Spleen (tissue), 13 donors: ENCODE measurements at regions of chr14 and their contacts with region 1.

Region 1: DNA sequence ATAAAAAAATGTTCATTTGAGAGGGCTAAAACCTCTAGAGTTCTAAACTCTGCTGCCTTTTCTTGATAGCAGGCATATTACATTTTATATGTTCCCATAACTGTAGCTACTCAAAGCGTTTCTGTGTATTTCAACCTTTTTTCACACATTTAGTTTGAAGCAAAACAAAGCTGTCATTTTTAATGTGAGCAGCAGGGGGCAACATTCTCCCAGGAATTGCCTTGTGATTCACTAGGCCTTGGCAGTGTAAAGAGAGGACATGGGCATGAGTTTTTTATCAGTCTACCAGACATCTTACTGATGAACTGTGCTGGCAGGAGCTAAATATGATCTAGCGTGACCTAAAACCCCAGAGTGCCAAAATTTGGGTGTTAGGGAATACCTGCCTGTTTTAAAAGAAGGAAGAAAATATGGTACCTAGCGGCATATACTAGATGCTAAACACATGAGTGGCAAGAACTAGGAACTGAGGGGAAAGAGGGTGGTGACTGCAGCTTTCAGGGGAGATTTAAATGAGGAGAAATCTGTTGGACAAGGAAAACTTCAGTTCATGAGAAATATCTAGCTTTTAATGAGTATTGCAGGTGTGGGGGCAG is 65.3 kb downstream of the IFT43 start:
- DNase-seq: no peak
- H3K4me3 ChIP-seq: no peak overlapping the region
- H3K27ac ChIP-seq: no peak overlapping the region
- H3K4me1 ChIP-seq: peaks cover 0 to 15% (median 6%) of the 10 kb centered on the region in 6 donors
- H3K27me3 ChIP-seq: no peaks in the 10 kb centered on the region
- CTCF ChIP-seq: peak; percentile 57 to 85 (median 72)
- POLR2A ChIP-seq: no peak

Region 2: DNA sequence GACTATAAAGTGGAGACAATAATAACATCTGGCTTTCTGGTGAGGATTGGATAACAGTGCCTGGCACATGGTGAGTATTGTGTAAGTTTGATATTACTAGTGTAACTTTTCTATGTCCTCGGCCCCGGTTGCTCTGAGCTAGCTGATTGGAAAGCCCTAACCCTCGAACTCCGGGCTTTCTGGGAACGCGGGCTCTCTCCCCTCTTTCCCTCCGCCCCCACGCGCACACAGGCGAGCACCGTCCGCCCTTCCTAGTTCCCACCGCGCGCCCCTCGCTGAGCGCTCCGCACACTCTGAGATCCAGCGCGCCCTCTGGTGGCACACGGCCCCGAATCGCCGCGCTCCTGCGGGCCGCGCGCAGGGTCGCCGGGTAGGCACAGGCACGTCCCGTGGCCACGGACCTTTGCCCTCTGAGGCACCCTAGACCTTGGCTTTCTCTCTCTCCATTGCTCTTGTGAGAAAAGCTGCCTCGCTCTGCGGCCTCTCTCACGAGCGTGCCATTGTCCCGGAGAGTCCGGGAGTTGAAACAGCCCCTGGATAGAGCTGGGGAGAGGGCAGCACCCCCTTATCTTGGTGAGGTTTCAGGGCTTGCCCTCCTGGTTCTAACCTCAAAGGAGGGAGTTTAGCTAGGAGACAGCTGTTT is 301.9 kb after region 1 on chr14:
- intact Hi-C with region 1: loop called (anchors 2 kb)
- DNase-seq: peak; percentile 81
- H3K4me3 ChIP-seq: peak overlapping the region in 1 of 8 donors; percentile 21
- H3K27ac ChIP-seq: no peak overlapping the region
- H3K4me1 ChIP-seq: peaks cover 0 to 18% (median 13%) of the 10 kb centered on the region in 6 donors
- H3K27me3 ChIP-seq: peaks cover 0 to 64% (median 9%) of the 10 kb centered on the region in 7 donors
- CTCF ChIP-seq: peak; percentile 36 to 87 (median 78)
- POLR2A ChIP-seq: no peak

Region 3: GRCh38 chr14:76386915-76387782 is 336.3 kb after region 1 on chr14:
- intact Hi-C with region 1: loop called (anchors 10 kb)
- DNase-seq: no peak
- H3K4me3 ChIP-seq: no peak overlapping the region
- H3K27ac ChIP-seq: no peak overlapping the region
- H3K4me1 ChIP-seq: no peaks in the 10 kb centered on the region
- H3K27me3 ChIP-seq: peaks cover 0 to 76% (median 23%) of the 10 kb centered on the region in 7 donors
- CTCF ChIP-seq: peak; percentile 44 to 91 (median 79)
- POLR2A ChIP-seq: no peak

Region 4: GRCh38 chr14:76647697-76648298 is 596.9 kb after region 1 on chr14:
- intact Hi-C with region 1: loop called (anchors 10 kb)
- DNase-seq: no peak
- H3K4me3 ChIP-seq: no peak overlapping the region
- H3K27ac ChIP-seq: no peak overlapping the region
- H3K4me1 ChIP-seq: no peaks in the 10 kb centered on the region
- H3K27me3 ChIP-seq: peaks cover 0 to 25% (median 0%) of the 10 kb centered on the region in 7 donors
- CTCF ChIP-seq: peak in 10 of 11 experiments; percentile 16 to 83 (median 72)
- POLR2A ChIP-seq: no peak